Dorsolateral prefrontal cortex (tissue), 120 donors: ENCODE measurements at regions of chr15 and their contacts with region 1.

Region 1: GRCh38 chr15:83436458-83437158 is 10.5 kb upstream of the SH3GL3 start:
- DNase-seq: no peak
- H3K4me3 ChIP-seq: no peak overlapping the region
- H3K27ac ChIP-seq: no peak overlapping the region
- H3K27me3 ChIP-seq: no peaks in the 10 kb centered on the region
- CTCF ChIP-seq: peak in 55 of 56 donors; percentile 32 to 79 (median 59)

Region 2: GRCh38 chr15:83011271-83012075 is 425.1 kb before region 1 on chr15 and contains the start of gene C15orf40:
- intact Hi-C with region 1: loop called in 1 of 2 experiments (anchors 5 kb)
- DNase-seq: peak; percentile 80 to 93 (median 90)
- H3K4me3 ChIP-seq: peak within 1 kb of the TSS; percentile 72 to 100 (median 95)
- H3K27ac ChIP-seq: peak within 1 kb of the TSS; percentile 42 to 95 (median 87)
- H3K27me3 ChIP-seq: no peaks in the 10 kb centered on the region
- CTCF ChIP-seq: peak; percentile 57 to 94 (median 83)
- total RNA-seq, gene C15orf40: 15.7 to 34.4 (median 22.5) TPM

Region 3: DNA sequence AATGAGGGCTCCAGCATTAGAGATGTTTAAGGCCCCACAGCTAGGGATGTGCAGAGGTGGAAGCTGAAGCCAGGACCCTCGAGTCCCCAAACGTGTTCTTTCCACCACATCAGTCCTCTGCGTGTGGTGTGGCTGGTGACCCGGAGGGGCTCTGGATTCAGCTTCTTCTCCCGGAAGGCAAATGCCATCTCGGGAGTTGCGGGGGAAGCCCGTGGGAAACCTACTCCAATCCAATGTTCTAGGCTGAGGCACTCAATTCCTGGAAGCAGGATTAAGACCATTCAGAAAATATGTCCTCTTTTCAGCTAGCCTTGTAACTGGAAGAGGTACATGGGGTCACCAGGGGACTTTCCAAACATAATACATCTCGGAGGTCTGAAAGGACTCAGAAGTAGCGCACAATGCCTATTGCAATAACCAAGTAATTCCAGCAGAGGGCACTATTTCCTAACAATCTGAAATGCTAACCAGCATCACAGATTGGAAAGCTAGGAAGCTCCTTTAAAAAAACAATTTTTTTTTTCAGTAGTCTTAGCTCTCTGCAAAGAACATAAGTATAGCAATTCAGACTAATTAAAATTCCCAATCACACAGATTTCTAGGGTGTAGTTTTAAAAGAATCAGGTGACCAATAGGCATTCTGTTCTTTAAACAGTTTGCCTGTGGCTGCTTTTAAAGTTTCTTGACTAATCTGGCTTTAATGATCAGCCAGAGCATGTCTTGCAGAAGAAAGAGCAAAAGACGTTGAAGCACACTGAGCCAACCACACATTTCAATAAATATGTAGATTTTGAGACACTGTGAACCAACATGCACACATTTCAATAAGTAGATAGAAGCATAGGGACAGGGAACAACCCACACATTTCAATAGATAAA is 188.2 kb before region 1 on chr15:
- intact Hi-C with region 1: loop called (anchors 1 to 5 kb)
- DNase-seq: peak in 3 of 10 donors; percentile 4 to 34 (median 27)
- H3K4me3 ChIP-seq: peak overlapping the region in 36 of 59 donors; percentile 2 to 52 (median 31)
- H3K27ac ChIP-seq: no peak overlapping the region
- H3K27me3 ChIP-seq: peaks cover 0 to 15% (median 3%) of the 10 kb centered on the region in 45 donors
- CTCF ChIP-seq: peak; percentile 89 to 100 (median 98)

Region 4: DNA sequence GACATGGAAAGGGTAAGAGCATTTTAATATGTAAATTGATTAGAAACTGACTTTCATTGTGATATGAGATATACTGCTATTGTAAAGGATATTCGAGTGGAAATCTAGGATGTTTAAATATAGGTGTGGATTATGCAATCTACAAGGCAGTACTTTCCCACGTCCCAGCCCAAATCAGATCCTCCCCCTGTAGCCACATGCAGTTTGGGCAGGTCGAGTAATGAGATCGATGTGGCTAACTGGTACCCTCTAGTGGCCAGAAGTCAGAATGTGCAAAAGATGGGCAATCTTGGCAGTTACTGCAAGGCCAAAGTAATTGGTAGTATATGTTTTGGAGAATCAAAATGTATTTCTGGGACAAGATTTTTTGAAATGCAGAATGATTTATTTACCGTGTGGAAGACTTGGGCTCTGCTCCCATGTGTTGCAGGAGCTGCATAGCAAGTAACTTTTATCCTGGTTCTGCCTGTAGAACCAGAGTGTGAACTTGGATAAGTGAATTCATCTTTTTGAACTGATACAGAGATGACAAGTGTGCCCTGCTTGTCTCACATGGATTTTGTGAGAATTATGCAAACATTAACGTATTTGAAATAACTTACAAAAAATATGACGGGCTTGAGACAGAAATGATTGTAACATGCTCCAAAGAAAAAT is 122.8 kb after region 1 on chr15:
- intact Hi-C with region 1: loop called in 1 of 2 experiments (anchors 2 kb)
- DNase-seq: peak in 9 of 10 donors; percentile 61 to 86 (median 70)
- H3K4me3 ChIP-seq: peak overlapping the region in 12 of 59 donors; percentile 2 to 33 (median 15)
- H3K27ac ChIP-seq: peak overlapping the region in 52 of 59 donors; percentile 1 to 99 (median 64)
- H3K27me3 ChIP-seq: no peaks in the 10 kb centered on the region
- CTCF ChIP-seq: peak; percentile 73 to 97 (median 91)

Region 5: GRCh38 chr15:83747050-83747717 is 310.6 kb after region 1 on chr15:
- intact Hi-C with region 1: loop called in 1 of 2 experiments (anchors 5 kb)
- DNase-seq: peak in 1 of 10 donors; percentile 40
- H3K4me3 ChIP-seq: no peak overlapping the region
- H3K27ac ChIP-seq: no peak overlapping the region
- H3K27me3 ChIP-seq: no peaks in the 10 kb centered on the region
- CTCF ChIP-seq: peak in 49 of 56 donors; percentile 0 to 68 (median 45)

Region 6: GRCh38 chr15:84035399-84035766 is 598.8 kb after region 1 on chr15:
- intact Hi-C with region 1: loop called in 1 of 2 experiments (anchors 5 kb)
- DNase-seq: no peak
- H3K4me3 ChIP-seq: no peak overlapping the region
- H3K27ac ChIP-seq: no peak overlapping the region
- H3K27me3 ChIP-seq: no peaks in the 10 kb centered on the region
- CTCF ChIP-seq: peak in 53 of 56 donors; percentile 22 to 64 (median 46)